ENCODE measurements at regions of chr11 and their contacts with region 1.

Region 1: GRCh38 chr11:65251476-65251875 is 10.3 kb upstream of the POLA2 start:
- DNase-seq: no peak
- ATAC-seq: no peak
- H3K4me3 ChIP-seq: no peak overlapping the region
- H3K4me3 Mint-ChIP-seq: no peak overlapping the region
- H3K27ac ChIP-seq: no peak overlapping the region
- H3K27ac Mint-ChIP-seq: no peak overlapping the region
- H3K4me1 ChIP-seq: no peaks in the 10 kb centered on the region
- H3K4me1 Mint-ChIP-seq: no peaks in the 10 kb centered on the region
- H3K27me3 ChIP-seq: no peaks in the 10 kb centered on the region
- H3K27me3 Mint-ChIP-seq: no peaks in the 10 kb centered on the region
- CTCF ChIP-seq: no peak

Region 2: DNA sequence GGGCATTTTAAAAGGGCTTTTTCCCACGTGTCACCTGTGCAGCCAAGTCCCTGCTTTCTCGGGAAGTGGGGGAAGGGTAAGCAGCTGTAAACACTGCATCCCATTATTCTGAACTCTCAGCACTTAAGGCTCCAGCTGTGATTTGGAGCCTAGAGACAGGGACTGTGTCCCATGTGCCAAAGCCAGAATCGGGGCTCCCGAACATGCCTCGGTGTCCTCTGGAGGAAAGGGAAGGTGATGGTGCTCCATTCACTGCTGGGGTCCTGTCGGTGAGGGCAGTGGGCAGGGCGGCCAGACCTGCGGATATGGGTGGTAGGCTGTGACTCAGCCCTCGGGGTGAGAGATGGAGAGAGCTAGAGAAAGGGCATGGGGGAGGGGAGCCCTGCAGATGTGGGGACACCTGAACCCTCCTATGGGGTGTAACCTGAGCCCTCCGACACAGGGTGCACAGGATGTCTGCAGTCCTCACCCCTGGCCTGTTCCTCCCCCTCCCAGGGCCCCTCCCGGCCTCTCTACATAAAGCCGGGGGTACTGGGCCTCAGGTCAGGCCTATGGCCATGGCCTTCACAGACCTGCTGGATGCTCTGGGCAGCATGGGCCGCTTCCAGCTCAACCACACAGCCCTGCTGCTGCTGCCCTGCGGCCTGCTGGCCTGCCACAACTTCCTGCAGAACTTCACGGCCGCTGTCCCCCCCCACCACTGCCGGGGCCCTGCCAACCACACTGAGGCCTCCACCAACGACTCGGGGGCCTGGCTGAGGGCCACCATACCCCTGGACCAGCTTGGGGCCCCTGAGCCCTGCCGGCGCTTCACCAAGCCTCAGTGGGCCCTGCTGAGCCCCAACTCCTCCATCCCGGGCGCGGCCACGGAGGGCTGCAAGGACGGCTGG is 37.9 kb before region 1 on chr11:
- intact Hi-C with region 1: loop called (anchors 5 kb)
- DNase-seq: peak; percentile 33 to 46
- ATAC-seq: peak; percentile 65 to 89 (median 78)
- H3K4me3 ChIP-seq: peak overlapping the region; percentile 9
- H3K4me3 Mint-ChIP-seq: peak overlapping the region; percentile 78
- H3K27ac ChIP-seq: no peak overlapping the region
- H3K27ac Mint-ChIP-seq: peak overlapping the region in 1 of 2 donors; percentile 31
- H3K4me1 ChIP-seq: peaks cover 37% of the 10 kb centered on the region
- H3K4me1 Mint-ChIP-seq: peaks cover 26 to 46% of the 10 kb centered on the region in 2 donors
- H3K27me3 ChIP-seq: no peaks in the 10 kb centered on the region
- H3K27me3 Mint-ChIP-seq: peaks cover 0 to 5% of the 10 kb centered on the region in 2 donors
- CTCF ChIP-seq: no peak